Ovary (tissue), 10 donors: ENCODE measurements at regions of chr1 and their contacts with region 1.

Region 1: DNA sequence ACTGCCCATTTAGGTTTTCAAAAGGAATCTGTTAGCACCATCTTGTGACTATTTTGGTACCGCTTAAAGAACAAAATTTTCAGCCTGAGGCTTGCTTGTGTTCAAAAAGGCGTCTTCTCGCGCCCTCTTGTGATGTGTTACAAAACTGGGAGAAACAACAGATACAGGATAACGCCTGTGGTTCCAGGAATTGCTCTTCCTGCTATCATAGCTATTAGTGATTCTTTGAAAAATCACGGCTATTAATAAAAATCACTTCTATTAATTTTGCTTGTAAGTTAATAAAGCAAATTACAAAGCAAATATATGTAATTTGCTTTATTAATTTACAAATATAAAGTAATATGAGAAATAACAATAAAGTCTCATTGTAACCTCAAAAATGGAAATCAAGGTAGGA is 82.2 kb upstream of the ABCD3 start:
- DNase-seq: peak; percentile 60 to 84 (median 73)
- H3K4me3 ChIP-seq: no peak overlapping the region
- H3K27ac ChIP-seq: no peak overlapping the region
- H3K4me1 ChIP-seq: no peaks in the 10 kb centered on the region
- H3K27me3 ChIP-seq: no peaks in the 10 kb centered on the region
- CTCF ChIP-seq: peak; percentile 46 to 96 (median 94)
- EP300 ChIP-seq: no peak
- POLR2A ChIP-seq: no peak

Region 2: DNA sequence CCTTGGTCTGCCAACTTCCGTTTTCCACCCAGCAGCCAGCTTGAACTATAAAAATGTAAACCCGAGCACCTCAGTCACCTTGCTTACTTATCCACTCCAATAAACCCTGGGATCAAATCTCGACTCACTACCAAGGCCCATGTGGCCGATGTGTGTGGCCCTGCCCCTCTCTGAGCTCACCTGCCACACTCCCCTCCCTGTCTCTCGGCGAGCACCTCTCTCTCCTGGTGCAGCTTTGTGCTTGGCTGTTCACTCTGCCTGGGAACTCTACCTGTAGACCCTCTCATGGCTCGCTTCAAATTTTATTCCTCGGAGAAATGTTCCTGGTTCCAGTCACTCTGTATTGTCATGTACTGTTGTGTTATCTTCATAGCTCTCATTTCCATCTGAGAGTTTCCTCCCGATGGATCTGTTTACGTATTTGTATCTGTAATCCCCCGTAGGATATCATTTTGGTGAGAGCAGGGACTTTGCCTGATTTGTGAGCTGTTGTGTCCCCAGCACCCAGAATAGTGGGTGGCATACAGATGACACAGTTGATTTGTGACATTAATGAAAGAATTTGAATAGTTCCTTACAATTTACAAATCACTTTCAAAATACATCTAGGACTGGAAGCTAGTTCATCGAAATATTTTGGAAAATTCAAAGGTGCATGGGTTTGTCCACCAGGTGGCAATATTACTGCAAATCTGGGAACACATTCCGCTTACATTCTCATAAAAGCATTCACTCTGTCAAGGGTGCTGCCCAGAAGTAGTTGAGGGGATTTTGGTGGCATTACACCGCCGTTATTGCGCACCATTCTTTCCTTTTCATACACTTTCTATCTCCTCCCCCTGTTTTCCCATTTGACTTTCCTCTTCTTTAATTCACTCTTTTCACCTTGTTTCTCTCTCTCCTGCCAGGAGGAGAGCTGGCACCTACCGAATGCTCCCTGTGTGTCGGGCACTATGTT is 310.3 kb before region 1 on chr1:
- intact Hi-C with region 1: loop called (anchors 2 to 5 kb)
- DNase-seq: peak in 1 of 5 donors; percentile 51
- H3K4me3 ChIP-seq: no peak overlapping the region
- H3K27ac ChIP-seq: no peak overlapping the region
- H3K4me1 ChIP-seq: peaks cover 7% of the 10 kb centered on the region
- H3K27me3 ChIP-seq: no peaks in the 10 kb centered on the region
- CTCF ChIP-seq: peak; percentile 60 to 83 (median 81)
- EP300 ChIP-seq: no peak
- POLR2A ChIP-seq: no peak

Region 3: GRCh38 chr1:94045465-94046056 is 290.4 kb before region 1 on chr1:
- intact Hi-C with region 1: loop called (anchors 5 kb)
- DNase-seq: peak; percentile 80 to 88 (median 85)
- H3K4me3 ChIP-seq: peak overlapping the region; percentile 11
- H3K27ac ChIP-seq: peak overlapping the region in 1 of 2 donors; percentile 26
- H3K4me1 ChIP-seq: peaks cover 2% of the 10 kb centered on the region
- H3K27me3 ChIP-seq: no peaks in the 10 kb centered on the region
- CTCF ChIP-seq: peak; percentile 70 to 90 (median 75)
- EP300 ChIP-seq: no peak
- POLR2A ChIP-seq: no peak

Region 4: GRCh38 chr1:94055459-94056122 is 280.4 kb before region 1 on chr1:
- intact Hi-C with region 1: loop called in 3 of 4 experiments (anchors 2 to 5 kb)
- DNase-seq: no peak
- H3K4me3 ChIP-seq: no peak overlapping the region
- H3K27ac ChIP-seq: no peak overlapping the region
- H3K4me1 ChIP-seq: no peaks in the 10 kb centered on the region
- H3K27me3 ChIP-seq: no peaks in the 10 kb centered on the region
- CTCF ChIP-seq: no peak
- EP300 ChIP-seq: no peak
- POLR2A ChIP-seq: no peak

Region 5: GRCh38 chr1:94202241-94202640 is 133.7 kb before region 1 on chr1:
- intact Hi-C with region 1: no loop called
- DNase-seq: no peak
- H3K4me3 ChIP-seq: no peak overlapping the region
- H3K27ac ChIP-seq: no peak overlapping the region
- H3K4me1 ChIP-seq: no peaks in the 10 kb centered on the region
- H3K27me3 ChIP-seq: no peaks in the 10 kb centered on the region
- CTCF ChIP-seq: no peak
- EP300 ChIP-seq: no peak
- POLR2A ChIP-seq: no peak